CD8-positive, alpha-beta memory T cell (primary cell): ENCODE measurements at regions of chr16 and their contacts with region 1.

Region 1: DNA sequence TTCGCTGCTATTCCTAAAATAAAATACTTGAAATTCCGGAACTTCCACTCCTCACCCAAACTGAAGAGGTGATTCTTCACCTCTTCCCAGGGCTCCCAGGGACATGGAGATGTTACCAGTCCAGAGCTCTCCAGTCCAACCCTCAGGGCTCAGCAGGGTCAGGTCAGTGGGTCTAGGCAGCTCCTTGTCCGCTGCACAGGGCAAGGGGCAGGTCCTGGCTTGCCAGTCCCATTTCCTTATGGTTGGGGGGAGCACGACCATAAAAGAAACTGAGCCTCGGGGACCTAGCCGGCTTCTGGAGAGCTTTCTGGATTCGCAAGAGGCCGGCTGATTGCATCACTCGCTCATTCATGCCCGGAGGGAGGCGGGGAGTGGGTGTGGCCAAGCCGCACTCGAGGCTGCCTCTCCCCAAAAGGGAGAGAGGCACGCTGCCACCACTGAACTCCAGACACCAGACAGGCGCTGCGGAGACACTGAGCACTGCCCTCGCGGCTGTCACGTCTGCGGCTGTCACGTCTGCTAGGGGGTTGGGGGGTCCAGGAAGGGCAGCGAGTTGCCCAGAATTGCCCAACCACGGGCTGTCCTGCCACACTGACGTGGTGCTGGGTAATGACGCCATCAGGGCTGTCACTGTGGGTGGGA is 15.8 kb downstream of the SLC7A5 start:
- DNase-seq: peak; percentile 66 to 91 (median 86)
- H3K4me3 ChIP-seq: peak overlapping the region; percentile 46
- H3K4me3 Mint-ChIP-seq: peak overlapping the region; percentile 57 to 87 (median 68)
- H3K27ac ChIP-seq: peak overlapping the region; percentile 82
- H3K27ac Mint-ChIP-seq: peak overlapping the region; percentile 70 to 99 (median 90)
- H3K4me1 ChIP-seq: peaks cover 53% of the 10 kb centered on the region
- H3K4me1 Mint-ChIP-seq: peaks cover 41 to 64% (median 46%) of the 10 kb centered on the region in 3 donors
- H3K27me3 ChIP-seq: no peaks in the 10 kb centered on the region
- H3K27me3 Mint-ChIP-seq: peaks cover 0 to 1% of the 10 kb centered on the region in 2 donors

Region 2: GRCh38 chr16:87484487-87485331 is 368.8 kb before region 1 on chr16:
- CTCF ChIA-PET with region 1: no interaction called
- POLR2A ChIA-PET with region 1: no interaction called
- DNase-seq: no peak
- H3K4me3 ChIP-seq: no peak overlapping the region
- H3K4me3 Mint-ChIP-seq: peak overlapping the region in 5 of 7 donors; percentile 50 to 68 (median 62)
- H3K27ac ChIP-seq: no peak overlapping the region
- H3K27ac Mint-ChIP-seq: peak overlapping the region in 6 of 8 donors; percentile 81 to 98 (median 84)
- H3K4me1 ChIP-seq: peaks cover 48% of the 10 kb centered on the region
- H3K4me1 Mint-ChIP-seq: peaks cover 69 to 78% (median 76%) of the 10 kb centered on the region in 3 donors
- H3K27me3 ChIP-seq: no peaks in the 10 kb centered on the region
- H3K27me3 Mint-ChIP-seq: no peaks in the 10 kb centered on the region

Region 3: GRCh38 chr16:87834623-87835407 is 18.7 kb before region 1 on chr16:
- CTCF ChIA-PET with region 1: interaction called, 18 read pairs
- POLR2A ChIA-PET with region 1: no interaction called
- DNase-seq: no peak
- H3K4me3 ChIP-seq: no peak overlapping the region
- H3K4me3 Mint-ChIP-seq: peak overlapping the region in 1 of 7 donors; percentile 23
- H3K27ac ChIP-seq: no peak overlapping the region
- H3K27ac Mint-ChIP-seq: peak overlapping the region in 1 of 8 donors; percentile 66
- H3K4me1 ChIP-seq: no peaks in the 10 kb centered on the region
- H3K4me1 Mint-ChIP-seq: no peaks in the 10 kb centered on the region
- H3K27me3 ChIP-seq: no peaks in the 10 kb centered on the region
- H3K27me3 Mint-ChIP-seq: peaks cover 0 to 2% of the 10 kb centered on the region in 2 donors

Region 4: GRCh38 chr16:87918866-87919680 is 65.5 kb after region 1 on chr16:
- CTCF ChIA-PET with region 1: interaction called, 10 read pairs
- POLR2A ChIA-PET with region 1: no interaction called
- DNase-seq: no peak
- H3K4me3 ChIP-seq: no peak overlapping the region
- H3K4me3 Mint-ChIP-seq: no peak overlapping the region
- H3K27ac ChIP-seq: no peak overlapping the region
- H3K27ac Mint-ChIP-seq: peak overlapping the region in 1 of 8 donors; percentile 90
- H3K4me1 ChIP-seq: no peaks in the 10 kb centered on the region
- H3K4me1 Mint-ChIP-seq: no peaks in the 10 kb centered on the region
- H3K27me3 ChIP-seq: no peaks in the 10 kb centered on the region
- H3K27me3 Mint-ChIP-seq: peaks cover 5 to 12% of the 10 kb centered on the region in 2 donors

Region 5: DNA sequence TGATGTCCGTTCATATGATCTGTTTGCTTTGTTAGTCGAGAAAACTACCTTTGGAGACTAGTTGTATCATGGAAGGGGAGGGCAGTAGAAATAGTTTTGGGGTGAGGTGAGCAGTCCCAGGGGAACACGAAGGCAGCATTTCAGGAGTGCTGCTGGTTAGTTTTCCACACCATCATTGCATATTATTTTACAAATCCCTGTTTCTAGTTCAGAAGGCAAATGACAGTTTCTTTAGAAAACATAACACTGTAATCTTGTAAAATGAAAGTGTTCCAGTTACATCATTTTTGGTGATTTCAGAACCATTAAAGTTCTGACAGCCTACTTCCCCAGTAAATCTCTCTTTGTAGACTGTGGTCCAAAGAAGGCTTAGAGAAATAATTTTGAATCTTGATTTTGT is 123.1 kb after region 1 on chr16:
- CTCF ChIA-PET with region 1: no interaction called
- POLR2A ChIA-PET with region 1: no interaction called
- DNase-seq: no peak
- H3K4me3 ChIP-seq: no peak overlapping the region
- H3K4me3 Mint-ChIP-seq: no peak overlapping the region
- H3K27ac ChIP-seq: no peak overlapping the region
- H3K27ac Mint-ChIP-seq: no peak overlapping the region
- H3K4me1 ChIP-seq: peaks cover 6% of the 10 kb centered on the region
- H3K4me1 Mint-ChIP-seq: peaks cover 47 to 60% (median 52%) of the 10 kb centered on the region in 3 donors
- H3K27me3 ChIP-seq: no peaks in the 10 kb centered on the region
- H3K27me3 Mint-ChIP-seq: no peaks in the 10 kb centered on the region